Lower leg skin (tissue), 4 donors: ENCODE measurements at regions of chr11 and their contacts with region 1.

Region 1: GRCh38 chr11:113305440-113306336 is 8.7 kb upstream of the TTC12 start:
- DNase-seq: peak; percentile 56 to 93
- H3K4me3 ChIP-seq: no peak overlapping the region
- CTCF ChIP-seq: peak in 1 of 3 donors; percentile 51
- POLR2A ChIP-seq: no peak

Region 2: GRCh38 chr11:113528982-113529381 is 223.3 kb after region 1 on chr11:
- intact Hi-C with region 1: loop called (anchors 5 kb)
- DNase-seq: peak in 1 of 2 donors; percentile 18
- H3K4me3 ChIP-seq: no peak overlapping the region
- CTCF ChIP-seq: no peak
- POLR2A ChIP-seq: no peak

Region 3: GRCh38 chr11:113796663-113797259 is 491.1 kb after region 1 on chr11:
- intact Hi-C with region 1: loop called (anchors 10 kb)
- DNase-seq: no peak
- H3K4me3 ChIP-seq: no peak overlapping the region
- CTCF ChIP-seq: no peak
- POLR2A ChIP-seq: no peak